ENCODE measurements at regions of chr15 and their contacts with region 1.

Region 1: DNA sequence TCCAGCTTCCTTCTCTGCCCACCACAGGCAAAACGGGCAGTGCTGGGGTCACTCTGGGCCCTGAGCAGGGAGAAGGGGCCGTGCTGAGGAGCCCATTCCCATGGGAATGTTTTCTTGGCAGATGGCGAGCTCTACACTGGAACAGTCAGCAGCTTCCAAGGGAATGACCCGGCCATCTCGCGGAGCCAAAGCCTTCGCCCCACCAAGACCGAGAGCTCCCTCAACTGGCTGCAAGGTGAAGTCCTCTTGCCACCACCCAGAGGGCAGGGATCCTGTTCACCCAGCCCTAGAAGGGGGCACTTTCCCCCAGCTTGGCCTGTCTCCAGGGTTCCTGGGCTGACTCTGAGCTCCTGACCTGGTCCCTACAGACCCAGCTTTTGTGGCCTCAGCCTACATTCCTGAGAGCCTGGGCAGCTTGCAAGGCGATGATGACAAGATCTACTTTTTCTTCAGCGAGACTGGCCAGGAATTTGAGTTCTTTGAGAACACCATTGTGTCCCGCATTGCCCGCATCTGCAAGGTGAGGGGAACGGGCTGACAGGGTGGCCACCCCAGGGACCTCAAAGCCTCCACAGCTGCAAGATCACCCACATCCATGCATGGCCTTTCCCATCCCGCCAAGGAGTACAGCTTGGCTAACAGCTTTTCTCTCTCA is 12.4 kb downstream of the CIB1 start:
- DNase-seq: peak in 5 of 14 experiments; percentile 28 to 57 (median 41)
- ATAC-seq: peak; percentile 40
- H3K4me3 ChIP-seq: no peak overlapping the region
- H3K4me3 Mint-ChIP-seq: no peak overlapping the region
- H3K27ac ChIP-seq: no peak overlapping the region
- H3K27ac Mint-ChIP-seq: no peak overlapping the region
- H3K4me1 ChIP-seq: peaks cover 6% of the 10 kb centered on the region
- H3K4me1 Mint-ChIP-seq: peaks cover 13% of the 10 kb centered on the region
- H3K27me3 ChIP-seq: no peaks in the 10 kb centered on the region
- H3K27me3 Mint-ChIP-seq: no peaks in the 10 kb centered on the region
- CTCF ChIP-seq: no peak

Region 2: DNA sequence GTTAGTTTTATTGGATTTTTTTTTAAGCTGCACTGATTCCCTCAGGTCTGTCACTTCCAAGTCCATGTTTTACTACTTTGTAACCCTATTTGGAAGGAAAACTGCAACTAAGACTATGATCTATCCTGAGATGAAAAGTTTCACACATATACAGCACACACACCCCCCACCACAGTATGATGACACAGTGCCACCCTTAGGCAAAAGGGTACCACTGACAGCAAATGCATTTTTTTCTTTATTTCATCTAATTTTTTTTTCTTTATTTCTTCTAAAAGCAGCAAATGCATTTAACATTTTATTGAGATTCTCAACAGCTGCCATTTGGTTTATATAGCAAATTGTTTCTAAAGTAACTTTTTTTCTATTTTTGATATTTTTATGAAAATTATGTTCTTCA is 65.3 kb after region 1 on chr15:
- CTCF ChIA-PET with region 1: no interaction called
- POLR2A ChIA-PET with region 1: no interaction called
- intact Hi-C with region 1: loop called in 1 of 2 experiments (anchors 1 kb)
- DNase-seq: peak in 11 of 14 experiments; percentile 14 to 77 (median 44)
- ATAC-seq: peak; percentile 98
- H3K4me3 ChIP-seq: no peak overlapping the region
- H3K4me3 Mint-ChIP-seq: no peak overlapping the region
- H3K27ac ChIP-seq: no peak overlapping the region
- H3K27ac Mint-ChIP-seq: no peak overlapping the region
- H3K4me1 ChIP-seq: peaks cover 2% of the 10 kb centered on the region
- H3K4me1 Mint-ChIP-seq: no peaks in the 10 kb centered on the region
- H3K27me3 ChIP-seq: no peaks in the 10 kb centered on the region
- H3K27me3 Mint-ChIP-seq: no peaks in the 10 kb centered on the region
- CTCF ChIP-seq: peak; percentile 89

Region 3: DNA sequence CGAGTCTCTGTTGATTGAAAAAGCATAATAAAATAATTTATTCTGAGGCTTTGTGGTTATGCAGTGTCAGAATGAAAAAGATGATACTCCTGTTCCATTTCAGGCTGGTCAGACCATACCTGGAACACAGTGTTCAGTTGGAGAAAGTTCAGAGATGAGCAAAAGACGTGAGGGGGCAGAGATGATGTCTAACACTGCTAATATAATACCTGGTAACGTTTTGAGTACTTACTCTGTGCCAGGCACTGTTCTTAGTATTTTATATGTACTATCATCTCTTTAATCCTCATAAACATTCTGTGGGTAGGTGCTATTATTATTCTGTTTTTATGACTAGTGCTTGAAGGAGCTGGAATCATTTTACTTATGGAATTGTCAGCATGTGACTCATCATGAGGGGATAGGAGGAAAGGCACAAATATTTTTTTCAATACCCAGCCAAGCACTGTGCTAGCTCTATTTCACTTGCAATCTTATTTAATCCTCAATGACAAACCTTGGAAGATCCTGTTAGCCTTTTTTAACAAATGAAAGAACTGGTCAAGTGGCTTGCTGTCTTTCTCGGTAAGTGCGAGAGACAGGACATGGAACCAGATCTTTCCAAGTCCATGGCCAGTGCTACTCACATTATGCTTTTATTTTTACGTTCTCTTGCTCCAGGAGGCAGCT is 198.5 kb after region 1 on chr15:
- CTCF ChIA-PET with region 1: no interaction called
- POLR2A ChIA-PET with region 1: no interaction called
- intact Hi-C with region 1: no loop called
- DNase-seq: no peak
- ATAC-seq: no peak
- H3K4me3 ChIP-seq: no peak overlapping the region
- H3K4me3 Mint-ChIP-seq: peak overlapping the region; percentile 26
- H3K27ac ChIP-seq: no peak overlapping the region
- H3K27ac Mint-ChIP-seq: peak overlapping the region; percentile 71
- H3K4me1 ChIP-seq: peaks cover 38% of the 10 kb centered on the region
- H3K4me1 Mint-ChIP-seq: peaks cover 72% of the 10 kb centered on the region
- H3K27me3 ChIP-seq: no peaks in the 10 kb centered on the region
- H3K27me3 Mint-ChIP-seq: no peaks in the 10 kb centered on the region
- CTCF ChIP-seq: no peak